ENCODE measurements at regions of chr1 and their contacts with region 1.

Region 1: GRCh38 chr1:151156515-151156819 is at the start of gene TNFAIP8L2:
- DNase-seq: no peak
- ATAC-seq: no peak
- H3K4me3 ChIP-seq: no peak within 1 kb of the TSS
- H3K27ac ChIP-seq: no peak within 1 kb of the TSS
- H3K4me1 ChIP-seq: no peaks in the 10 kb centered on the region
- H3K27me3 ChIP-seq: no peaks in the 10 kb centered on the region
- CTCF ChIP-seq: no peak
- POLR2A ChIP-seq: no peak
- RAD21 ChIP-seq: no peak
- total RNA-seq, gene TNFAIP8L2: not detected in 2 replicates

Region 2: GRCh38 chr1:150995896-150996295 is 160.6 kb before region 1 on chr1:
- CTCF ChIA-PET with region 1: no interaction called
- POLR2A ChIA-PET with region 1: no interaction called
- dilution Hi-C with region 1: no loop called
- in situ Hi-C with region 1: no loop called
- intact Hi-C with region 1: no loop called
- DNase-seq: no peak
- ATAC-seq: peak; percentile 80
- H3K4me3 ChIP-seq: no peak overlapping the region
- H3K27ac ChIP-seq: no peak overlapping the region
- H3K4me1 ChIP-seq: peaks cover 1% of the 10 kb centered on the region; the same call in 1 of the 2 replicates
- H3K27me3 ChIP-seq: no peaks in the 10 kb centered on the region
- CTCF ChIP-seq: peak; percentile 60
- POLR2A ChIP-seq: no peak
- RAD21 ChIP-seq: peak; percentile 44

Region 3: DNA sequence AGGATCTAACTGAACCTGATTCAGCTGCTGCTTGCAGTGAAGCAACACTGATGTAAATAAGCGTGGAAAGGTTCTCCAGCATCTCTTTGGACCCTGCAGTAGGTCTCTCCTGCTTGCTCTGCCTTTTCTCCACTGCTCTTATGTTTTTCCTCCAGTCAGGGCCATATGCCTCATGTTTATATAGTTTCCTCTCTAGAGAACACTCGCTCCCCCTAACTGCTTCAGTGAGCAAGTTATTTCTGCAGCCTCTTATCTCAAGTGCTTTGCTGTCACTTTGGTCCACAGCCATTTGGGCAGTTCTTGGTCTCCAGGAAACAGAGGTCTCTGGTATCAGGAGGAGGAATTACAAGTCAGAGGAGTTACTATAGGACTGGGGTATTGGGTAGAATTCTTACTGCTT is 142.9 kb before region 1 on chr1:
- CTCF ChIA-PET with region 1: no interaction called
- POLR2A ChIA-PET with region 1: no interaction called
- dilution Hi-C with region 1: no loop called
- in situ Hi-C with region 1: no loop called
- intact Hi-C with region 1: no loop called
- DNase-seq: peak; percentile 63
- ATAC-seq: peak; percentile 65
- H3K4me3 ChIP-seq: no peak overlapping the region
- H3K27ac ChIP-seq: no peak overlapping the region
- H3K4me1 ChIP-seq: 0 out of 2 replicates have a peak, but pooled peaks cover 1% of the 10 kb centered on the region
- H3K27me3 ChIP-seq: no peaks in the 10 kb centered on the region
- CTCF ChIP-seq: no peak
- POLR2A ChIP-seq: no peak
- RAD21 ChIP-seq: no peak

Region 4: DNA sequence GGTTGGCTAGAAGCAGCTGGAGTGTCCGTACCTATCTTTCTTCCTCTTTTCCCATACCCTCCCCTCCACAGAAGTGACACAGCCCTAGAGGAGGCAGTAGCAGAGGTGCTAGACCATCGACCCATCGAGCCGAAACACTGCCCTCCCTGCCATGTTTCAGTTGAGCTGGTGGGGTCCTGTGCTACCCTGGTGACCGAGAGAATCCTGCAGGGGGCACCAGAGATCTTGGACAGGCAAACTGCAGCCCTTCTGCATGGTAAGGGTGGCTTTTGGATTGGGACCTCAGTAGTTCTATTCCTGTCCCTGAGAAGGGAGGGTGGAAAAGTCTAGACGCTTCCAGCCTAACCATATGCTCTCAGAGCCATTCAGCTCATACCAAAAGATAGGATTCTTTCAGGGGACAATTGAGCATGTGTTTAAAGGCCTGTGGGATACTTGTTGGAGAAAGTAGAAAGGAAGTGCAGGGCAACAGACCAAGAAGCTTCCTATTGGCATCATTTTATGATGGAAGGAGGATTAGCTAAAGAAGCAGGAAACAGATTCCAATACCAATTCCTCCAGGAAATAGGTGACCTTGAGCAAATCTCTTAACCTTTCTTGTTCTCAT is 131.8 kb before region 1 on chr1:
- CTCF ChIA-PET with region 1: no interaction called
- POLR2A ChIA-PET with region 1: no interaction called
- dilution Hi-C with region 1: no loop called
- in situ Hi-C with region 1: no loop called
- intact Hi-C with region 1: loop called (anchors 2 kb)
- DNase-seq: peak; percentile 62
- ATAC-seq: peak; percentile 95
- H3K4me3 ChIP-seq: no peak overlapping the region
- H3K27ac ChIP-seq: no peak overlapping the region
- H3K4me1 ChIP-seq: no peaks in the 10 kb centered on the region
- H3K27me3 ChIP-seq: no peaks in the 10 kb centered on the region
- CTCF ChIP-seq: peak; percentile 71
- POLR2A ChIP-seq: no peak
- RAD21 ChIP-seq: peak; percentile 79

Region 5: DNA sequence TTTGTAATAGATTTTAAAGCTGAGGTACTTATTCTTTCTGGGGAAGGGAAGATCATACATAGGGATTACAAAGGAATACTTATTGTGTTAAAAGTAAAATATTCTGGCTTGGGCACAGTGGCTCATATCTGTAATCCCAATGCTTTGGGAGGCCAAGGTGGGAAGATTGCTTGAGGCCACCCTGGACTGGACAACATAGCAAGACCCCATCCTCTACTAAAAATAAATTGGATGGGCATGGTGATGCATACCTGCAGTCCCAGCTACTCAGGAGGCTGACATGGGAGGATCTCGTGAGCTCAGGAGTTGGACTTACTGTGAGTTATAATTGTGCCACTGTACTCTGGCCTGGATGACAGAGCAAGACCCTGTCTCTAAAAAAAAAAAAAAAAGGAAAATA is 58.3 kb before region 1 on chr1:
- CTCF ChIA-PET with region 1: interaction called, 16 read pairs
- POLR2A ChIA-PET with region 1: no interaction called
- dilution Hi-C with region 1: no loop called
- in situ Hi-C with region 1: loop called (anchors 5 kb)
- intact Hi-C with region 1: loop called (anchors 1 kb)
- DNase-seq: no peak
- ATAC-seq: no peak
- H3K4me3 ChIP-seq: no peak overlapping the region
- H3K27ac ChIP-seq: no peak overlapping the region
- H3K4me1 ChIP-seq: no peaks in the 10 kb centered on the region
- H3K27me3 ChIP-seq: no peaks in the 10 kb centered on the region
- CTCF ChIP-seq: no peak
- POLR2A ChIP-seq: no peak
- RAD21 ChIP-seq: no peak